ENCODE measurements at regions of chr4 and their contacts with region 1.

Region 1: GRCh38 chr4:174764105-174764729 is 64.8 kb downstream of the GLRA3 start:
- DNase-seq: no peak
- H3K4me3 Mint-ChIP-seq: no peak overlapping the region
- H3K27ac Mint-ChIP-seq: peak overlapping the region; percentile 44
- H3K4me1 Mint-ChIP-seq: no peaks in the 10 kb centered on the region
- H3K27me3 Mint-ChIP-seq: no peaks in the 10 kb centered on the region
- CTCF ChIP-seq: no peak

Region 2: GRCh38 chr4:174663216-174663615 is 101.0 kb before region 1 on chr4:
- CTCF ChIA-PET with region 1: no interaction called
- intact Hi-C with region 1: no loop called
- DNase-seq: no peak
- H3K4me3 Mint-ChIP-seq: no peak overlapping the region
- H3K27ac Mint-ChIP-seq: no peak overlapping the region
- H3K4me1 Mint-ChIP-seq: peaks cover 13% of the 10 kb centered on the region
- H3K27me3 Mint-ChIP-seq: no peaks in the 10 kb centered on the region
- CTCF ChIP-seq: no peak

Region 3: DNA sequence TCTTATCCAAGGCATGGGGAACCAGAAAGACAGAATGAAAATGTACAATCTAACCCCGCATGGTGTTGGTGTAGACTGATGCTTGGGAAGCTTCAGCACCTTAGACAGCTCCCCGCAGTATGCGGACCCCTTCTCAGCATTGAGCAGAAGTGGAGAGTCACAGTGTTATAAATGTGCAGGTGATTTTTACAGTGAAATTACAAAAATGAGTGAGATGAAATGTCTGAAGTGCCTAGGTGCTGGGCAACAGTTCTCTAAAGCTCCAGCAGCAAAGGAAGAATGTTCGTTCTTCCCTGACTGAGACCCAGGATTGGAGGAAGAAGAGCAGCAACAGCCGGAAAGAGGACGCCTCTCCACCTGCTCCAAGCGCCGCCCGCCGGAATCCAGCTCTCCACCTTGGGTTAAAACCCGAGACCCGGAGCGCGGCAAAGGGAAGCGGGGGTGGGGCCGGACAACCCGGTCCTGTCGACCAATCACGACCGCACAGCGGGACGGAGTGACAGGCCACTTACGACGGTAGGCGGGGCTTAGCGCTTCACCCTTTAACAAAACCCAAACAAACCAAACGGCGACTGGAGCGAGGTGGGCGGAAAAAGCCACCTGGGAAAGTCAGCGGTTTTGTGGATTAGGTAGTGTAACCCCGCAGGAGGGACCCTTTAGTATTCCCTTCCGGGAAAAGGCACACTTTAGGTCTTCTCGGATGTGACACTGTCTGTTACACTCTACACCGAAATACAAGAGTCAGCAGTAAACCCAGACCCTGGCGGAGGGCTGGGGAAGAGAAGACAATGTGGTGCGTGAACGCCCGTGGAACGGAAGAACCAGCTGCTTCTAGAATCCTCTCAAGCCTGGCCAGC is 64.9 kb after region 1 on chr4 and contains the start of gene GLRA3:
- CTCF ChIA-PET with region 1: no interaction called
- intact Hi-C with region 1: loop called (anchors 2 kb)
- DNase-seq: peak; percentile 90
- H3K4me3 Mint-ChIP-seq: peak within 1 kb of the TSS; percentile 81
- H3K27ac Mint-ChIP-seq: peak within 1 kb of the TSS; percentile 85
- H3K4me1 Mint-ChIP-seq: no peaks in the 10 kb centered on the region
- H3K27me3 Mint-ChIP-seq: no peaks in the 10 kb centered on the region
- CTCF ChIP-seq: no peak
- total RNA-seq, gene GLRA3: 0.07 and 0.12 TPM in 2 replicates

Region 4: DNA sequence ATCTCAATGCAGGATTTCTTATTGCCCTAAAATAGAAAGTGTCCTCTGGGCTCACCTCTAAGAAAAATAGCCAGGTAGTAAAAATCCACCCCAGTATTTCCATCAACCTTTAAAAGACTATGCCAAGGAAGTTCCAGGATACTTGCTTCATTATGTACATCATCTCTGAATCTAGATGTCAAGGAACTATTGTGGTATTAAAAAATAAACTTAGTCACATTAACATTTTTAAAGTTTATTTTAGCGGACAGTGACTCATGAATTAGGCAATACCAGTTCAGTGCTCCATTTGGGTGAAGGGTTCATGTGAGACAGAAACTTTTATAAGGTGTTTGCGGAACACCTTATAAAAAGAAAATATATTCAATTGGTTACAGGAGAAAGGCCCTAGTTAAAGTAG is 363.1 kb after region 1 on chr4:
- CTCF ChIA-PET with region 1: no interaction called
- intact Hi-C with region 1: loop called (anchors 10 kb)
- DNase-seq: no peak
- H3K4me3 Mint-ChIP-seq: no peak overlapping the region
- H3K27ac Mint-ChIP-seq: no peak overlapping the region
- H3K4me1 Mint-ChIP-seq: no peaks in the 10 kb centered on the region
- H3K27me3 Mint-ChIP-seq: no peaks in the 10 kb centered on the region
- CTCF ChIP-seq: no peak

Region 5: DNA sequence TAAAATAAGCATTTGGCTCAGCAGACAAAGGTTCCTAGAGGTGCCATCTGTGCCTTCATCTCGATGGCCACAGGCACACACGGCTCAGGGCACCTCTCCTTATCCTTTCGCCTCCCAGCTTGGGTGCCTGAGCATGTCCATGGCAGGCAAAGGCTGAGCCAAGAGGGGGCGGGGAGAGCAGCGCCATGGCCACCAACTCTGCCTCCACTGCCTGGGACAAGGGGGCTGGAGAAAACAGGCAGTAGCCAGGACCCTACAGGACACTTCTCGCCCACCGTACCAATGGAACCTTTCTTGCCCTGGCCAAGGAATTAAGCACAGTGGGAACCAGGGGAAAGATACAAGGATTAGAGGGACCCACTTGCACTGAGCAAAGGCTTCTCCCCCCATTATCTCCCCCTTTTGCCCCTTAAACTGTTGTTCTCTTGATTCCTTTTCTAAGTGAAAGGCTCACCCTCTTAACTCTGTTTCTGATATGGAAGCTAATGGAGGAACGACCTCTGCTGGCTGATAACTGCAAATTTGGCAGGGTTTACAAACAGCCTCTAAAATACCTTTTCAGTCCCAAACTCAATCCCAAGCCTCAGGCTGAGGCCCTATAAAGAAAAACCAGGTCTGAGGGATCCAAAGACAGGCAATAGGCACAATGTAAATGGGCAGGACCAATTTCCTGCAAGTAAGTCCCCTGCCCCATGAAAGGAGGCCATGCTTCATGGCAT is 489.1 kb after region 1 on chr4:
- CTCF ChIA-PET with region 1: no interaction called
- intact Hi-C with region 1: loop called (anchors 5 kb)
- DNase-seq: no peak
- H3K4me3 Mint-ChIP-seq: no peak overlapping the region
- H3K27ac Mint-ChIP-seq: no peak overlapping the region
- H3K4me1 Mint-ChIP-seq: no peaks in the 10 kb centered on the region
- H3K27me3 Mint-ChIP-seq: no peaks in the 10 kb centered on the region
- CTCF ChIP-seq: peak; percentile 26

Region 6: DNA sequence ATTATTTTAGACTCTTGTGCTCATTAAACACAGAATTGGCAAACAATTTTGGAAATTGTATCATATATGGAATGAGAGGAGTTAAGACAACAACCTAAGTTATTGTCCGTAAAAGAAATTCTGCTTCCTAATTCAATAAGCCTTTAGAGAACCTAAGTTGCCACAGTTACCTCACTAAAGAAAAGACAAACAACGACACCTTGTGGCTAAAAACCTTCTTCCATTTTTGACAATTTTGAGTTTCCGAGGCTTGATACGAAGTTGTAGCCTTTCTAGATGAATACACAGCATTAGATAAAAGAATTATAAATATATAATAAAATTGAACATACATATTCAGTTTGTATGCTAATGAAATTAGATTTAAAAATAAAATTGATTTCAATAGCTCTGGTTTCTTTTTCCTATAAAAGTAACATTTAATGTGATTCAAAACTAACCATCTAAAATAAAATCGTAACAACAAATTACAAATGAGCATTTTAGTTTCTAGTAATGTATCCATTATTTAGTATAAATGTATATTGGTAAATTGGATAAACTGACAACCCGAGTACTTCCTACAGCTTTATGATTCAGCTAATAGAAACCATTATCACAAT is 772.7 kb after region 1 on chr4:
- CTCF ChIA-PET with region 1: no interaction called
- intact Hi-C with region 1: loop called (anchors 1 kb)
- DNase-seq: peak; percentile 6
- H3K4me3 Mint-ChIP-seq: no peak overlapping the region
- H3K27ac Mint-ChIP-seq: no peak overlapping the region
- H3K4me1 Mint-ChIP-seq: peaks cover 12% of the 10 kb centered on the region
- H3K27me3 Mint-ChIP-seq: no peaks in the 10 kb centered on the region
- CTCF ChIP-seq: no peak